Tibial artery (tissue), 4 donors: ENCODE measurements at regions of chr16 and their contacts with region 1.

Region 1: GRCh38 chr16:69754469-69755310 is at the start of gene NOB1:
- DNase-seq: peak; percentile 95 to 97
- H3K4me3 ChIP-seq: peak within 1 kb of the TSS; percentile 69 to 78
- H3K27ac ChIP-seq: peak within 1 kb of the TSS; percentile 58 to 80
- H3K4me1 ChIP-seq: peaks cover 0 to 19% (median 15%) of the 10 kb centered on the region in 4 donors
- H3K27me3 ChIP-seq: no peaks in the 10 kb centered on the region
- CTCF ChIP-seq: peak; percentile 97 to 100

Region 2: GRCh38 chr16:69396187-69397061 is 358.3 kb before region 1 on chr16:
- intact Hi-C with region 1: loop called (anchors 5 kb)
- DNase-seq: peak; percentile 75 to 80
- H3K4me3 ChIP-seq: no peak overlapping the region
- H3K27ac ChIP-seq: peak overlapping the region; percentile 73 to 80
- H3K4me1 ChIP-seq: peaks cover 0 to 23% (median 11%) of the 10 kb centered on the region in 4 donors
- H3K27me3 ChIP-seq: no peaks in the 10 kb centered on the region
- CTCF ChIP-seq: peak; percentile 72 to 79

Region 3: GRCh38 chr16:69709456-69710084 is 45.1 kb before region 1 on chr16:
- intact Hi-C with region 1: loop called (anchors 2 kb)
- DNase-seq: peak in 1 of 2 donors; percentile 42
- H3K4me3 ChIP-seq: no peak overlapping the region
- H3K27ac ChIP-seq: peak overlapping the region; percentile 21 to 31
- H3K4me1 ChIP-seq: peaks cover 0 to 19% (median 3%) of the 10 kb centered on the region in 4 donors
- H3K27me3 ChIP-seq: no peaks in the 10 kb centered on the region
- CTCF ChIP-seq: peak; percentile 56 to 80